Common myeloid progenitor, CD34-positive (primary cell): ENCODE measurements at regions of chr6 and their contacts with region 1.

Region 1: GRCh38 chr6:32894080-32895005 is 40.4 kb downstream of the PSMB9 start:
- DNase-seq: peak; percentile 92 to 96 (median 94)
- H3K4me3 ChIP-seq: peak overlapping the region; percentile 69 to 98 (median 97)
- H3K27ac ChIP-seq: peak overlapping the region; percentile 57 to 88
- H3K4me1 ChIP-seq: peaks cover 6 to 37% (median 18%) of the 10 kb centered on the region in 4 experiments
- H3K27me3 ChIP-seq: no peaks in the 10 kb centered on the region

Region 2: GRCh38 chr6:32940656-32941213 is 46.4 kb after region 1 on chr6 and contains the start of gene HLA-DMB:
- CTCF ChIA-PET with region 1: interaction called, 5 read pairs
- POLR2A ChIA-PET with region 1: interaction called, 10 read pairs
- DNase-seq: peak; percentile 85 to 88 (median 87)
- H3K4me3 ChIP-seq: peak within 1 kb of the TSS; percentile 70 to 97 (median 89)
- H3K27ac ChIP-seq: peak within 1 kb of the TSS; percentile 72 to 83
- H3K4me1 ChIP-seq: peaks cover 36 to 78% (median 59%) of the 10 kb centered on the region in 4 experiments
- H3K27me3 ChIP-seq: no peaks in the 10 kb centered on the region